Activated T-helper 1 cell treated with anti-CD3 and anti-CD28 coated beads, Interleukin-12 subunit alpha, Interleukin-12 subunit beta, Interleukin-2, Interleukin-4 antibody, amounts not matched to agents 30 ng/mL and 10 ng/mL and 1 ng/mL, durations not matched to agents 14 hours and 24 hours and 36 hours (primary cell): ENCODE measurements at regions of chr1 and their contacts with region 1.

Region 1: GRCh38 chr1:172686143-172686542 is 27.2 kb downstream of the FASLG start:
- DNase-seq: no peak
- H3K4me3 Mint-ChIP-seq: no peak overlapping the region
- H3K27ac Mint-ChIP-seq: no peak overlapping the region
- H3K4me1 Mint-ChIP-seq: peaks cover 17% of the 10 kb centered on the region
- H3K27me3 Mint-ChIP-seq: no peaks in the 10 kb centered on the region

Region 2: GRCh38 chr1:172613294-172613693 is 72.8 kb before region 1 on chr1:
- intact Hi-C with region 1: no loop called
- DNase-seq: no peak
- H3K4me3 Mint-ChIP-seq: no peak overlapping the region
- H3K27ac Mint-ChIP-seq: no peak overlapping the region
- H3K4me1 Mint-ChIP-seq: peaks cover 24% of the 10 kb centered on the region
- H3K27me3 Mint-ChIP-seq: no peaks in the 10 kb centered on the region

Region 3: GRCh38 chr1:172699111-172699510 is 13.0 kb after region 1 on chr1:
- intact Hi-C with region 1: loop called (anchors 1 kb)
- DNase-seq: peak; percentile 72
- H3K4me3 Mint-ChIP-seq: peak overlapping the region; percentile 62
- H3K27ac Mint-ChIP-seq: peak overlapping the region; percentile 88
- H3K4me1 Mint-ChIP-seq: no peaks in the 10 kb centered on the region
- H3K27me3 Mint-ChIP-seq: no peaks in the 10 kb centered on the region

Region 4: DNA sequence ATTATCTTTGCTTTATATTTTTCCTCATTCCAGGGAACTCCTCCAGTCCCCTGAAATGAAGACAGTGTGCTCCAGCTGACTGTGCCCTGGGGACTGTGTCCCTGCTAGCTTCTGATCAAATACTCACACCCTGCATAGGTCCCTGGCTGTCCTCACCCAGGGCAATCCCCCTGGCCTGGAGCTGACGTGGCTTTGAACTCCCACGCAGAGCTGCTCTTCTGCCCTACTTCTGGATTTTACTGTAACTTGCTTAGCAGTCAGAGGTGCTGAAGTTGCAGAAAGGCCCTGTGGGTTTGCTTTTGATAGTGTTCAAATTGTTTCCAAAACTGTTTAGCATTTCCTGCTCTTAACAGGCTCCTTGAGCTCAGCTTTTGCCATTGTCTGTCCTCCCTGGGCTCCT is 159.2 kb after region 1 on chr1:
- intact Hi-C with region 1: no loop called
- DNase-seq: peak; percentile 44
- H3K4me3 Mint-ChIP-seq: peak overlapping the region; percentile 23
- H3K27ac Mint-ChIP-seq: peak overlapping the region; percentile 44
- H3K4me1 Mint-ChIP-seq: peaks cover 33% of the 10 kb centered on the region
- H3K27me3 Mint-ChIP-seq: peaks cover 45% of the 10 kb centered on the region